Sigmoid colon (tissue), 7 donors: ENCODE measurements at regions of chr1 and their contacts with region 1.

Region 1: DNA sequence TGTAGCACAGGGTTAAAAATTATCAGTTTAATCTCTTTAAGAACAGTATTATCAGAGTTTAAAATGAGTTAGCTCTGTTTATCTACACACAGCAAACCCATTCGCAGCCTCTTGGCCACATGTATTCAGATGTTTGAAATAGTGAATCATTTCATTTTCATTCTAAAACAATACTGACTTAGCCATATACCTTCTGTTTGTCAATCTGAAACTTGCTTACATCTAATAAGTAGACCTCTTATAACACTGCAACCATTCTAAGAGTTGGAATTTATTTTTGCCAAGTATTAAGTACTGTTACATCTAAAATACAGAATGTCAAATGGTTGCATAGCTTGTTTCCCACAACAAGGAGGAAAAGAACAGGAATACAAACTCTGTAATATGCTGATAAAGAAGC is 25.4 kb downstream of the ANGEL2 start:
- DNase-seq: no peak
- H3K4me3 ChIP-seq: no peak overlapping the region
- H3K27ac ChIP-seq: no peak overlapping the region
- H3K4me1 ChIP-seq: no peaks in the 10 kb centered on the region
- H3K27me3 ChIP-seq: no peaks in the 10 kb centered on the region
- CTCF ChIP-seq: no peak
- EP300 ChIP-seq: no peak
- POLR2A ChIP-seq: no peak

Region 2: GRCh38 chr1:212477014-212477679 is 513.1 kb before region 1 on chr1:
- intact Hi-C with region 1: loop called (anchors 10 kb)
- DNase-seq: peak; percentile 93
- H3K4me3 ChIP-seq: no peak overlapping the region
- H3K27ac ChIP-seq: no peak overlapping the region
- H3K4me1 ChIP-seq: peaks cover 0 to 6% (median 2%) of the 10 kb centered on the region in 4 donors
- H3K27me3 ChIP-seq: no peaks in the 10 kb centered on the region
- CTCF ChIP-seq: peak; percentile 62 to 88 (median 79)
- EP300 ChIP-seq: no peak
- POLR2A ChIP-seq: no peak

Region 3: DNA sequence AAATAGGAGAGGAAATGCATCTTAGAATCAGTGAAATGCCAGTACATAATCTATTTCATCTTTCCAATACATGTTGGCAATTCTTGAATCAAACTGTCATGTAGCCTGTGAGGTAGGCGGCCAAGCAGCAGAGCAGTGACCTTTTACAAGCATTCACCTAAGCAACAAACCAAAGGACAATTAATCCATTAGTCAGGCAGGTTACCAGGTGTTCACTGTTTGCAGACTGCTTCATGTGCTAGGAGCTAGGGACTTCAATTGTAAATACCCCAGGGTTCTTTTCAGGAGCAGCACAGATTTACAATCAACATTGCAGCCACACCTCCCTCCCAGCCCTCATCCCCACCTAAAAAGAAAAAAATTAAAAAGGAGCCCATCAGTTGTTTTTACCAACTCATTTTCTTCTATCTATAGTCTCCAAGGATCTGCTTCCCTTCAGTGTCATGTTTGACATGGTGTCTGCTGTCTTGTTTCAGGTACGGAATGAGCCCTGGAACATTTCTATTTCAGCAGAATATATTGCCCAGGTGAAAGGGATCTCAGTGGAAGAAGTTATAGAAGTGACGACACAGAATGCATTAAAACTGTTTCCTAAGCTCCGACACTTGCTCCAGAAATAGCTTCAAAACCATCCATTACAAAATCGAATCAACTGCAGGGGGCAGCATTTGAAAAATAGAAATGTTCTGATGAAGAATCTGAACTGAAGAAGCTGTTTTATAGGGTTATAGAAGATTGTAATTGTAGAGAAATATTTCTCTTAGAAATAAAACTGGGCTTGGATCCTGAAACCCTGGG is 175.5 kb before region 1 on chr1:
- intact Hi-C with region 1: loop called (anchors 5 kb)
- DNase-seq: no peak
- H3K4me3 ChIP-seq: no peak overlapping the region
- H3K27ac ChIP-seq: no peak overlapping the region
- H3K4me1 ChIP-seq: no peaks in the 10 kb centered on the region
- H3K27me3 ChIP-seq: no peaks in the 10 kb centered on the region
- CTCF ChIP-seq: peak in 2 of 4 experiments; percentile 13 to 41
- EP300 ChIP-seq: no peak
- POLR2A ChIP-seq: no peak

Region 4: GRCh38 chr1:212857992-212858460 is 132.2 kb before region 1 on chr1 and contains the start of gene FLVCR1:
- intact Hi-C with region 1: no loop called
- DNase-seq: peak; percentile 98
- H3K4me3 ChIP-seq: peak within 1 kb of the TSS; percentile 81 to 98 (median 92)
- H3K27ac ChIP-seq: peak within 1 kb of the TSS; percentile 88 to 93 (median 92)
- H3K4me1 ChIP-seq: peaks cover 0 to 39% (median 30%) of the 10 kb centered on the region in 4 donors
- H3K27me3 ChIP-seq: no peaks in the 10 kb centered on the region
- CTCF ChIP-seq: no peak
- EP300 ChIP-seq: no peak
- POLR2A ChIP-seq: peak; percentile 31 to 64
- total RNA-seq, gene FLVCR1: 2.9 to 6.9 (median 5.1) TPM

Region 5: DNA sequence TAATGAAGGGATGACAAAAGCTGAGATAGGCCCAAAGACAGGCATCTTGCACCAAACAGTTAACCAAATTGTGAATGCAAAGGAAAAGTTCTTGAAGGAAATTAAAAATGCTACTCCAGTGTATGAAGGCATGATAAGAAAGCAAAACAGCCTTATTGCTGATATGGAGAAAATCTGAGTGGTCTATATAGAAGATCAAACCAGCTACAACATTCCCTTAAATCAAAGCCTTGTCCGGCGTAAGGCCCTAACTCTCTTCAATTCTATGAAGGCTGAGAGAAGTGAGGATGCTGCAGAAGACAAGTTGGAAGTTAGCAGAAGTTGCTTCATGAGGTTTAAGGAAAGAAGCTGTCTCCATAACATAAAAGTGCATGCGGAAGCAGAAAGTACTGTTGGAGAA is 29.7 kb after region 1 on chr1:
- intact Hi-C with region 1: no loop called
- DNase-seq: no peak
- H3K4me3 ChIP-seq: no peak overlapping the region
- H3K27ac ChIP-seq: no peak overlapping the region
- H3K4me1 ChIP-seq: no peaks in the 10 kb centered on the region
- H3K27me3 ChIP-seq: no peaks in the 10 kb centered on the region
- CTCF ChIP-seq: no peak
- EP300 ChIP-seq: no peak
- POLR2A ChIP-seq: no peak